CD14-positive monocyte (primary cell): ENCODE measurements at regions of chr2 and their contacts with region 1.

Region 1: GRCh38 chr2:128736689-128737545 is 418.2 kb upstream of the HS6ST1 start:
- DNase-seq: peak; percentile 65 to 70 (median 68)
- H3K4me3 ChIP-seq: peak overlapping the region; percentile 14 to 69 (median 25)
- H3K4me3 Mint-ChIP-seq: peak overlapping the region; percentile 74 to 89
- H3K27ac ChIP-seq: no peak overlapping the region
- H3K27ac Mint-ChIP-seq: peak overlapping the region in 2 of 7 donors; percentile 52 to 54
- H3K4me1 ChIP-seq: peaks cover 45 to 52% of the 10 kb centered on the region in 2 donors
- H3K4me1 Mint-ChIP-seq: peaks cover 46% of the 10 kb centered on the region
- H3K27me3 ChIP-seq: no peaks in the 10 kb centered on the region
- H3K27me3 Mint-ChIP-seq: peaks cover 0 to 13% (median 3%) of the 10 kb centered on the region in 3 donors
- CTCF ChIP-seq: peak; percentile 100

Region 2: GRCh38 chr2:128169497-128169896 is 567.4 kb before region 1 on chr2:
- intact Hi-C with region 1: loop called in 1 of 2 experiments (anchors 10 kb)
- DNase-seq: peak; percentile 72 to 95 (median 81)
- H3K4me3 ChIP-seq: peak overlapping the region in 1 of 3 experiments; percentile 34
- H3K4me3 Mint-ChIP-seq: peak overlapping the region in 1 of 2 donors; percentile 15
- H3K27ac ChIP-seq: peak overlapping the region; percentile 89 to 92
- H3K27ac Mint-ChIP-seq: peak overlapping the region; percentile 95 to 99 (median 98)
- H3K4me1 ChIP-seq: peaks cover 51 to 56% of the 10 kb centered on the region in 2 donors
- H3K4me1 Mint-ChIP-seq: peaks cover 44% of the 10 kb centered on the region
- H3K27me3 ChIP-seq: no peaks in the 10 kb centered on the region
- H3K27me3 Mint-ChIP-seq: peaks cover 0 to 3% (median 0%) of the 10 kb centered on the region in 3 donors
- CTCF ChIP-seq: no peak

Region 3: GRCh38 chr2:128513961-128514283 is 223.0 kb before region 1 on chr2:
- intact Hi-C with region 1: loop called in 1 of 2 experiments (anchors 10 kb)
- DNase-seq: peak; percentile 85 to 93 (median 90)
- H3K4me3 ChIP-seq: peak overlapping the region; percentile 18 to 67 (median 20)
- H3K4me3 Mint-ChIP-seq: peak overlapping the region; percentile 67 to 88
- H3K27ac ChIP-seq: peak overlapping the region; percentile 91 to 92
- H3K27ac Mint-ChIP-seq: peak overlapping the region; percentile 94 to 99 (median 98)
- H3K4me1 ChIP-seq: peaks cover 51 to 54% of the 10 kb centered on the region in 2 donors
- H3K4me1 Mint-ChIP-seq: peaks cover 53% of the 10 kb centered on the region
- H3K27me3 ChIP-seq: no peaks in the 10 kb centered on the region
- H3K27me3 Mint-ChIP-seq: peaks cover under 1 to 6% (median 3%) of the 10 kb centered on the region in 3 donors
- CTCF ChIP-seq: no peak

Region 4: DNA sequence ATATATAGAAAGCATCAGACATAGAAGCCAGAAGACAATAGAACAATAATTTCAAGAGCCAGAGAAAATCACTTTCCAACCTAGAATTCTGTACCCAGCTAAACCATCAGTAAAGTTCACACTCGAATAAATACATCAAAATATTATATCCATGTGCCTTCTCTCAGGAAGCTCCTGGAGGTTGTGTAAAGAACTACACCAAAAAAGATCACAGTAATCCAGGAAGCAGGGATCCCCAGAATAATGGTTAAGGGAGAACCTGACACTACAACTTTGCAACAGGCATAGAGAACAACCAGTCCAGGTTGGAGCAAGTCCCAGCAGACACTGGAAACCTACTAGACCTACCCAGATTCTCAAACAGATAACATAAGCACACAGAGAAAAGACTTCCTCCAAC is 16.4 kb before region 1 on chr2:
- intact Hi-C with region 1: no loop called
- DNase-seq: no peak
- H3K4me3 ChIP-seq: no peak overlapping the region
- H3K4me3 Mint-ChIP-seq: no peak overlapping the region
- H3K27ac ChIP-seq: no peak overlapping the region
- H3K27ac Mint-ChIP-seq: no peak overlapping the region
- H3K4me1 ChIP-seq: peaks cover 3 to 7% of the 10 kb centered on the region in 2 donors
- H3K4me1 Mint-ChIP-seq: peaks cover 8% of the 10 kb centered on the region
- H3K27me3 ChIP-seq: no peaks in the 10 kb centered on the region
- H3K27me3 Mint-ChIP-seq: peaks cover 0 to 5% (median 4%) of the 10 kb centered on the region in 3 donors
- CTCF ChIP-seq: peak; percentile 60